Calu3 (cell line): ENCODE measurements at regions of chr7 and their contacts with region 1.

Region 1: DNA sequence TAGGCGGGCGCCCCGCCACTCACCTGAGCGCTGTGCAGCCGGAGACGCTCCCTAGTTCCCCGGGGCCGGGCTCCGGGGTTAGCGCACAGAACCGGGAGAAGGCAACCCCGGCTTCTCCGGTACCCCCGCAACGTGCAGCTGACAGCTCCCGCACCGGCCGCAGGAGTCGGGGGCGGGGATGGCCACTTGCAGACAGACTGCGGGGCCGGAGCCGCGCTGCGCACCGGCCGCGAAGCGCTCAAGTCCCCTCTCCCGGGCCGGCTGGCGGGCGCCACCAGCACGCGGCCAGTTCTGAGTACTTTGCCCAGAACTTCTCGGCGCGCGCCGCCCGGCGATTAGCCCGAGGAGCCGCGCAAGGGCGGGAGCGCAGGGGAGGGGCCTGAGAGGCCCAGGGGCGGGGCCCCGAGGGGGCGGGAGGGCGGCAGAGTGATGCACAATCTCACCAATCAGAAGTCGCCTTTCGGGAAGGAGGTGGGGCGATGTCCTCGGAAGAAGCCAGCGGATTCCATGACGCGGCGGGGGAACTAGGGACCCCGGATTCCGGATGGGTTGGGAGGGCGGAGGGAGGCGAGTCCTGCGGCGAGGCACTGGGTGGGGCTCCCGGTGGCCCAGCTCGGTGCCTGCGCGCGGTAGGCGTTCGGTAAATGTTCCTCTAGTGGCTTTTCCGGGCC is at the start of gene OSBPL3:
- DNase-seq: peak; percentile 99
- H3K4me3 Mint-ChIP-seq: peak within 1 kb of the TSS; percentile 86
- H3K27ac Mint-ChIP-seq: peak within 1 kb of the TSS; percentile 92
- H3K4me1 Mint-ChIP-seq: peaks cover 48% of the 10 kb centered on the region
- H3K27me3 Mint-ChIP-seq: no peaks in the 10 kb centered on the region
- CTCF ChIP-seq: no peak
- total RNA-seq, gene OSBPL3: 124 and 136 TPM in 2 replicates

Region 2: GRCh38 chr7:24617957-24618616 is 361.9 kb before region 1 on chr7:
- CTCF ChIA-PET with region 1: no interaction called
- intact Hi-C with region 1: no loop called
- DNase-seq: no peak
- H3K4me3 Mint-ChIP-seq: no peak overlapping the region
- H3K27ac Mint-ChIP-seq: no peak overlapping the region
- H3K4me1 Mint-ChIP-seq: peaks cover 8% of the 10 kb centered on the region
- H3K27me3 Mint-ChIP-seq: no peaks in the 10 kb centered on the region
- CTCF ChIP-seq: no peak

Region 3: GRCh38 chr7:24825931-24826661 is 153.9 kb before region 1 on chr7:
- CTCF ChIA-PET with region 1: interaction called, 21 read pairs
- intact Hi-C with region 1: loop called (anchors 1 kb)
- DNase-seq: peak; percentile 94
- H3K4me3 Mint-ChIP-seq: peak overlapping the region; percentile 41
- H3K27ac Mint-ChIP-seq: peak overlapping the region; percentile 88
- H3K4me1 Mint-ChIP-seq: peaks cover 80% of the 10 kb centered on the region
- H3K27me3 Mint-ChIP-seq: no peaks in the 10 kb centered on the region
- CTCF ChIP-seq: no peak

Region 4: GRCh38 chr7:24907311-24907886 is 72.6 kb before region 1 on chr7:
- CTCF ChIA-PET with region 1: interaction called, 7 read pairs
- intact Hi-C with region 1: loop called (anchors 5 kb)
- DNase-seq: peak; percentile 69
- H3K4me3 Mint-ChIP-seq: no peak overlapping the region
- H3K27ac Mint-ChIP-seq: no peak overlapping the region
- H3K4me1 Mint-ChIP-seq: peaks cover 23% of the 10 kb centered on the region
- H3K27me3 Mint-ChIP-seq: no peaks in the 10 kb centered on the region
- CTCF ChIP-seq: no peak

Region 5: DNA sequence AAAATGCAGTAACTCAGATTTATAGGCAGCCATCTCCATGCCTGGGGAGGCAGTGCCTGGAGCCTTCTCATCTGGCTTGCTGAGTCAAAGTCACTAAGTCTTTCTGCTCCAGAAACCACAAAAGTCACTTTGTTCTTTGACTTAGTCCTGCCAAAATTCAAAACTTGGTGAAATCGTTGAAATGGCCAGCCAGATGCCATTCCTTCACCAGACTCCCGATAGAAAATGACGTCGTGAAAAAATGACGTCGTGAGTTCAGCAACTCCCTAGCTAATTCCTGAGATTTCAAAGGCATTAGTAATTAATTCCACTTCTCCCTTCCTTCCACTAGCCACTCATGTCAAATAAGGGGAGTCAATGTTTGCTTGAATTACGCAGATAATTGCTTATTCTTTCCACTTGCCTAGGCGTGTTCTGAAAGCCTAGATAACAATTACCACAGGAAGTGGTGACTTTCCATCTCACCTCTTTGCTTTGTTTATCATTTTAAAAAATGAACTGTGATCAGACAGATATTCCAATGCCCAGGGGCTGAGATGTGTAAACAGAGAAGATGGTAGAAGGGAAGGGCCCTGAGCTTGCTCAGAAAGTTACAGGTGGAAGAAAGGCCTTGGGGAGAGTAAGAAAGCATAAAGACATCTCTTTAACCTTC is 48.5 kb after region 1 on chr7:
- CTCF ChIA-PET with region 1: interaction called, 16 read pairs
- intact Hi-C with region 1: loop called (anchors 2 kb)
- DNase-seq: peak; percentile 68
- H3K4me3 Mint-ChIP-seq: peak overlapping the region; percentile 26
- H3K27ac Mint-ChIP-seq: peak overlapping the region; percentile 96
- H3K4me1 Mint-ChIP-seq: peaks cover 94% of the 10 kb centered on the region
- H3K27me3 Mint-ChIP-seq: no peaks in the 10 kb centered on the region
- CTCF ChIP-seq: no peak

Region 6: GRCh38 chr7:25069900-25070443 is 90.0 kb after region 1 on chr7:
- CTCF ChIA-PET with region 1: interaction called, 29 read pairs
- intact Hi-C with region 1: loop called (anchors 1 kb)
- DNase-seq: peak; percentile 77
- H3K4me3 Mint-ChIP-seq: peak overlapping the region; percentile 21
- H3K27ac Mint-ChIP-seq: peak overlapping the region; percentile 35
- H3K4me1 Mint-ChIP-seq: peaks cover 39% of the 10 kb centered on the region
- H3K27me3 Mint-ChIP-seq: no peaks in the 10 kb centered on the region
- CTCF ChIP-seq: peak; percentile 74

Region 7: DNA sequence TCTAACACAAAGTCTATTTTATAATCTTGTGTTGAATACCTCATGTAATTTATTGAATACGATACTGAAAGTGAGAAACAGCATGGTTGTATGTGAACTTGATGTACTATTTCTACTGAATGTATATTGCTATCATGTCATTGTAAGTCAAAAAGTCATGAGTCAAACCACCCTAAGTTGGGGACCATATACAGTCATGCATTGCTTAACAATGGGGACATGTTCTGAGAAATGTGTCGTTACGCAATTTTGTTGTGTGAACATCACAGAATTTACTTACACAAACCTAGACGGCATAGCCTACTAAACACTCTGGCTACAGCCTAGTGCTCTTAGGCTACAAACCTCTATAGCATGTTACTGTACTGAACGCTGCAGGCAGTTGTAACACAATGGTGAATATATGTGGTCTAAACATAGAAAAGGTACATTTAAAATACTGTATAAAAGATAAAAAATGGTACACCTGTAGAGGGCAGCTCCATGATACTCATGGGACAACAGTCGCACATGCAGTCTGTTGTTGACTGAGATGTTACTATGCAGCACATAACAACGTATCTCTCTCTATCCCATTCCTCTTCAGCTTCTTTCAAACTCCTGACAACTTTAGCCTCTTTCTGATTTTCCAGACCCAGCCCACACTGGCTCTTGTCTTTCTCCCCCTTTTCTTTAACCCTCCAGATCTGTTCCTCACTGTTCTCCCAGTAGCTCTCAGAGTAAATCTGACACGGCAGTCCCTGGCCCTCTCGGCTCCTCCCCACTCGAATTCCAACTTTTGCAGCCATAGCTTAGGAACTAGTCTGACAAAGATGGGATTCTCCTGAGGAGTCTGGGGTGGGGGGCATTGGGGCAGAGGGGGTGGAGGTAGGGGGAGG is 1401.7 kb after region 1 on chr7:
- CTCF ChIA-PET with region 1: no interaction called
- intact Hi-C with region 1: no loop called
- DNase-seq: no peak
- H3K4me3 Mint-ChIP-seq: no peak overlapping the region
- H3K27ac Mint-ChIP-seq: no peak overlapping the region
- H3K4me1 Mint-ChIP-seq: peaks cover 6% of the 10 kb centered on the region
- H3K27me3 Mint-ChIP-seq: no peaks in the 10 kb centered on the region
- CTCF ChIP-seq: no peak